Mucosa of descending colon (tissue), 3 donors: ENCODE measurements at regions of chr5 and their contacts with region 1.

Region 1: GRCh38 chr5:59799668-59800346 is 93.7 kb downstream of the PDE4D start:
- DNase-seq: peak in 1 of 3 donors; percentile 57
- ATAC-seq: peak; percentile 87
- H3K4me3 ChIP-seq: no peak overlapping the region
- H3K4me1 ChIP-seq: peaks cover 10% of the 10 kb centered on the region
- CTCF ChIP-seq: peak; percentile 47

Region 2: DNA sequence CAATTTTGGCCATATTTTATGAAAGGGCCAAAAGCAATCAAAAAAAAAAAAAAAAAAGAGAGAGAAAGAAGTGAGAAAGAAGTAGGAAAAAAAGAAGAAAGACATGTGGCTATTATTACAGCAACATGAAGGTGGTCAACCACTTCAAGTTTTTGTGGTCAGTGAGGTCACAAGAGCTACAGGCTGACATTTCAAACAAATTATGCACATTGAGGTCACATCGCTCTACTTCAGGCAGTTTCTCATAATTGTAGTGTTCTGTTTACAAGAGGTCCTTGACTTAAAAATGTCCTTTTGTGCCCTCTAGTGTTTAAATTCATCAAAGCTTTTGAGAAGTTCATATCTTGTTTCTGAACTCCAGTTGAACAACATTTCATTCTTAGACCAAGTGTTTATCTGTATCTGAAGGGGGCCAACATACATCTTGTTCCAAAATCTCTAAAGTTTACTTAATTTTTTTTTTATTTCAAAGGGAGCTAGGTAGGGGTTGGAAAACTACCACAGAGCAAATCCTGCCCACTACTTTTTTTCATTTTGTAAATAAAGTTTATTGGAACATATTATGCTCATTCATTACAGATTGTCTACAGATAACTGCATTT is 419.4 kb before region 1 on chr5:
- intact Hi-C with region 1: loop called (anchors 5 to 10 kb)
- DNase-seq: no peak
- ATAC-seq: peak; percentile 70
- H3K4me3 ChIP-seq: no peak overlapping the region
- H3K4me1 ChIP-seq: no peaks in the 10 kb centered on the region
- CTCF ChIP-seq: no peak

Region 3: GRCh38 chr5:59385700-59386099 is 414.1 kb before region 1 on chr5:
- intact Hi-C with region 1: loop called (anchors 5 to 10 kb)
- DNase-seq: no peak
- ATAC-seq: no peak
- H3K4me3 ChIP-seq: no peak overlapping the region
- H3K4me1 ChIP-seq: no peaks in the 10 kb centered on the region
- CTCF ChIP-seq: no peak

Region 4: DNA sequence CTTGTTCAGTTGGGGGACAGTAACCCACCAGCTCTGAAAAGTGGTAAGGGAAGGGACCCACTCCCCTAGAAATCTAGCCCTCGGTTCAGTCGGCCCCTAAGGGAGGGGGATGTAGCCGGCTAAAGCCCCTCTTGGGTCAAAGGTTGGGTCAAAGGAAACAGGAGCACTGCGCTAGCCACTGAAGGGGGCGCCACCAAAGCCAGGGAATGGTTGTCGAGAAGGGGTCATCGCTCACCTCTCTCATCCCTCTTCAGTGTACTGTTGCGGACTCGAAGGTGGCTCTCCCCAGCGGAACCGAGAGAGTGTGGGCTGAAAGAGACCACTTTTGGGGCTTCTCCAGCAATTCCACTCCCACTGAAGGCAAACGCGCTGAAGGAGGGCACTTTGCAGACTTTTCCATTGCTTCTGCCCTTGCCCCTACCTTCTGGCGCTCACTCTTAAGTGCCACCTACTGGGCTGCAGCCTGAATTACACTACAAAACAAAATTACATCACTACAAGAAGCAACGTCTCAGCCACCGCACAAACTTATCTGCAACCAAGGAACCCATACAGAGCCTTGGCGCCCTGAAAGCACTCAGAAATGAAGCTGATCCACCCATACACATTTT is 303.2 kb before region 1 on chr5:
- intact Hi-C with region 1: no loop called
- DNase-seq: peak in 1 of 3 donors; percentile 26
- ATAC-seq: no peak
- H3K4me3 ChIP-seq: no peak overlapping the region
- H3K4me1 ChIP-seq: no peaks in the 10 kb centered on the region
- CTCF ChIP-seq: no peak